Transverse colon (tissue), 4 donors: ENCODE measurements at regions of chr12 and their contacts with region 1.

Region 1: DNA sequence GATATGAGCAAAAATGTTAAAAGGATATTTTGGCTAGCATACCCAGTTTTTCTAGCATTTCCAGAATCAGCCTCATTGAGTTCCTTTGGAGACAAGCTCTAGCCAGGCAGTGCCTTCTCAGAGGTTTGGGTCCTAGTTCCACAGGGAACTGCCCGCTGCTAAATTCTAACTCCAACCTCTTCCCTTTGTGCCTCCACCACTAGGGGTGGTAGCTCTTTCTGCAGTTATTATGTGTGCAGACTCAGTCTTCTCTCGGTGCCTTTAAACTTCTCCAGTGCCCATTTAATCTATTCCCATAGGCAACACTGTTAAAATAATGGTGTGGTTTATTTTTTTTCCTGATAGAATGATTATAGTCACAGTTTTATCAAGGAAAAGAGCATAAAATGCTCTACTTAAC is 21.5 kb upstream of the SLC25A3 start:
- DNase-seq: no peak
- H3K4me3 ChIP-seq: no peak overlapping the region
- H3K27ac ChIP-seq: no peak overlapping the region
- H3K4me1 ChIP-seq: peaks cover 0 to 21% (median 3%) of the 10 kb centered on the region in 4 donors
- H3K27me3 ChIP-seq: no peaks in the 10 kb centered on the region
- CTCF ChIP-seq: peak in 2 of 5 experiments; percentile 22 to 23
- EP300 ChIP-seq: no peak
- POLR2A ChIP-seq: no peak

Region 2: DNA sequence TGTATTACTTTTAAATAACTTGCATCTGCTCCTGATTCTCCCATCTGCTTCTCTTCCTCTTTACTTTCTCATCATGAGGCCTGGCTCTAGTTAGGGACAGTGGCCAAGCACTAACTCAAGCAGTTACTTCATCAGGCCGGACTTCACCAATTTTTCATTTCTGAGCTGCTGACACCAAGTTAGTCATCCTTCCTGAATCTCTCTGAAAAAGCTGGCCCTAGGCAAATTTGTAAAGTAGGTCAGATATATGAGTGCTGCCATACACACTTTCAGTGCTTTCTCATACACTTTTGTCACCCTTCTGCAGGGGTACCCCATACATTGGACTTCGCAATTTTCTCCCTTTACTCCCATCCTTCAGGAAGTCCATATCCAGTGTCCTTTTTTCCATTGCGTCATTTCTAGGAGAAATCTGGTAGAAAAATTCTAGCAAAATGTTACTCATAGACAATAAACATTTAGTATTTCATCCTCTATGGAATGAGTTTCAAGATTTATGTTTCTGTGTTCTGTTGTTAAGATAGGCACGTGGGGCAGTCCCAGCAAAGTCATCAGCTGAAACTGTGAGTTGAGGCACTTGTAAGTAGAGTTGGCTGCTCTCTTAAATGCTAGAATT is 333.4 kb before region 1 on chr12:
- in situ Hi-C with region 1: no loop called
- intact Hi-C with region 1: no loop called
- DNase-seq: no peak
- H3K4me3 ChIP-seq: no peak overlapping the region
- H3K27ac ChIP-seq: no peak overlapping the region
- H3K4me1 ChIP-seq: no peaks in the 10 kb centered on the region
- H3K27me3 ChIP-seq: no peaks in the 10 kb centered on the region
- CTCF ChIP-seq: no peak
- EP300 ChIP-seq: no peak
- POLR2A ChIP-seq: no peak

Region 3: DNA sequence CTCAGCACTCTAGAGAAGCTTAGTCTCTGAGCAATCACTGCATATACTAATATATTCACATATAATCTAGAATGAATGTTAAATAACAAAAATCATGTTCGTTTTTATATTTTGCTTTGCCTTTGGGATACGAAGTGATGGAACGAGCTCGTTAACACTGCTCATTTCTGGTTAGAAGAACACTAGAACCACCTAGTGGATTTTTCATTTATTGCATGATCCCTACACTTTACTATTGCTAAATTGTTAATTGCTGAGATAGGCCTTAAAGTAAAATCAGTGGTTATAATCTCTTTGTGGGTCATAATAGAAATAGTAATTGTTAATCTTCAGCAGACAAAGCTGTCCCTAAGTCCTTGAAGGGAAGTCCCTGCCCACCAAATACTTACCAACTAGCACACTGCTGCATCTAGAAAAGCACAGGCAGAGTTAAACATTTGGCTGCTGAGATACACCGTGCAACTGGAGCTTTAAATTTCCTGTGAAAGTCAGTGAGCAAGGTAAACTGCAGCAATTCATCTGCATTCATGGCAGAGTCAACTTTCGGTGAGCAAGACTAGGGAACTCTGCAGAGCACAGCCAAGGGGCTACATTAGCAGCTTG is 426.8 kb after region 1 on chr12:
- in situ Hi-C with region 1: loop called in 1 of 4 experiments (anchors 25 kb)
- intact Hi-C with region 1: no loop called
- DNase-seq: no peak
- H3K4me3 ChIP-seq: no peak overlapping the region
- H3K27ac ChIP-seq: no peak overlapping the region
- H3K4me1 ChIP-seq: no peaks in the 10 kb centered on the region
- H3K27me3 ChIP-seq: no peaks in the 10 kb centered on the region
- CTCF ChIP-seq: peak; percentile 43 to 67 (median 54)
- EP300 ChIP-seq: no peak
- POLR2A ChIP-seq: no peak